Tibial artery (tissue), 4 donors: ENCODE measurements at regions of chr6 and their contacts with region 1.

Region 1: DNA sequence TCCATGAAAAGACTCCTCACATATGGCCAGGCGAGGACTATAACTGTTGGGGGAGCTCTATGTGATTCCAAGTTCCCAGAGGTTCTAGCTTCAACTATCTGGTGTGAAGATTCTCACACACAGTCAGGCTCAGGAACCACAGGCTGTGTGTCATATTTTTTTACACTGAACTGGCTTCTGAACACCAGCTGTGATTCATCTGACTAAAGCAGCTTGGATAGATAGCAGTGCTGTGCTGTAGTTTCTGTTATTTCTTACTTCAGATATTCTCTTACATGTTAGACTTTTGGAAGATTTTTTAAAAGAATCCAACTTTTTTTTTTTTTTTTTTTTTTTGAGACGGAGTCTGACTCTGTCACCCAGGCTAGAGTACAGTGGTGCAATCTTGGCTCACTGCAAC is 140.7 kb upstream of the MCHR2 start:
- DNase-seq: no peak
- H3K4me3 ChIP-seq: no peak overlapping the region
- H3K27ac ChIP-seq: no peak overlapping the region
- H3K4me1 ChIP-seq: no peaks in the 10 kb centered on the region
- H3K27me3 ChIP-seq: no peaks in the 10 kb centered on the region
- CTCF ChIP-seq: no peak

Region 2: GRCh38 chr6:100035873-100036653 is 98.6 kb before region 1 on chr6:
- intact Hi-C with region 1: no loop called
- DNase-seq: no peak
- H3K4me3 ChIP-seq: no peak overlapping the region
- H3K27ac ChIP-seq: no peak overlapping the region
- H3K4me1 ChIP-seq: no peaks in the 10 kb centered on the region
- H3K27me3 ChIP-seq: no peaks in the 10 kb centered on the region
- CTCF ChIP-seq: no peak

Region 3: DNA sequence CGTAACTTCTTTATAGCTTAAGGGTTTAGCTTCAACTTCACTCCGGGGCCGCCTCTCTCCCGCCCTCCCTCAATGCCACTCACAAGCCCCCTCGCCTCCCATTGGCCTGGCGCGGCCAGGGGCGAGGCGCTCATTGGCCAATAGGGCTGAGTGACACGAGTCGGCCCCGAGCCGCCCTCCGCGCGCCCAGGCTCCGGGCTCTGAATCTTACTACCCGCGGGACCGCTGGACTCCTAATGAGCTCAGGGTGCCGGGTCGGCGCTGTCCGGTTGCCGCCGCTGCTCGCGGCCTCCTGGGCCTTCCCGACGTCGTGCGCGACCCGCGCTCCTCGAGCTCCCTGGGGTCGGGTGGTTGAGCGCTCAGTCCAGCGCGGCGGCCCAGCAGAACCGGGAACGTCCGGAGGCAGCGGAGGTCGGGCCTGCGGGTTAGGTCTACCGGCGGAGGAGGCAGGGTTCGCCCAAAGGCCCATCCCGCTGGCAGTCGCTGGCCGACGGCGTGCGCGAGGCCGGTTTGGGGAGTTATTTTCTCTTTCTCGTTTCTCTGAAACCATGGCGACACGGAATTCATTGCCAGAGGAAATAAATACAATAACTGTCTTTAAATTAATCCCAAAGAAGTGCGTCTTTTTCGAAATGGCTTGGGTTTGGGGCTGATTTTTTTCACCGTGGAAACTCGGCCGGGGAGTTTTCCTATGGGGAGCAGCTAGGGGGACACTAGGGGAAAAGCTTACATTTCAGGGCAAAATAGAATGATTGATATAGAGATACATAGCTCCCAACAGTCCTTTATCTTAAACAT is 330.4 kb after region 1 on chr6 and contains the start of gene SIM1:
- intact Hi-C with region 1: no loop called
- DNase-seq: peak in 1 of 2 donors; percentile 41
- H3K4me3 ChIP-seq: peak within 1 kb of the TSS in 1 of 2 donors; percentile 29
- H3K27ac ChIP-seq: no peak within 1 kb of the TSS
- H3K4me1 ChIP-seq: peaks cover 0 to 33% (median 19%) of the 10 kb centered on the region in 4 donors
- H3K27me3 ChIP-seq: peaks cover 5 to 100% of the 10 kb centered on the region in 2 donors
- CTCF ChIP-seq: no peak

Region 4: GRCh38 chr6:100488244-100488643 is 353.5 kb after region 1 on chr6:
- intact Hi-C with region 1: loop called (anchors 5 kb)
- DNase-seq: no peak
- H3K4me3 ChIP-seq: no peak overlapping the region
- H3K27ac ChIP-seq: no peak overlapping the region
- H3K4me1 ChIP-seq: no peaks in the 10 kb centered on the region
- H3K27me3 ChIP-seq: peaks cover 0 to 11% of the 10 kb centered on the region in 2 donors
- CTCF ChIP-seq: no peak